Activated T-helper 1 cell treated with anti-CD3 and anti-CD28 coated beads, Interleukin-12 subunit alpha, Interleukin-12 subunit beta, Interleukin-2, Interleukin-4 antibody, amounts not matched to agents 30 ng/mL and 10 ng/mL and 1 ng/mL, durations not matched to agents 14 hours and 24 hours and 36 hours (primary cell): ENCODE measurements at regions of chr14 and their contacts with region 1.

Region 1: DNA sequence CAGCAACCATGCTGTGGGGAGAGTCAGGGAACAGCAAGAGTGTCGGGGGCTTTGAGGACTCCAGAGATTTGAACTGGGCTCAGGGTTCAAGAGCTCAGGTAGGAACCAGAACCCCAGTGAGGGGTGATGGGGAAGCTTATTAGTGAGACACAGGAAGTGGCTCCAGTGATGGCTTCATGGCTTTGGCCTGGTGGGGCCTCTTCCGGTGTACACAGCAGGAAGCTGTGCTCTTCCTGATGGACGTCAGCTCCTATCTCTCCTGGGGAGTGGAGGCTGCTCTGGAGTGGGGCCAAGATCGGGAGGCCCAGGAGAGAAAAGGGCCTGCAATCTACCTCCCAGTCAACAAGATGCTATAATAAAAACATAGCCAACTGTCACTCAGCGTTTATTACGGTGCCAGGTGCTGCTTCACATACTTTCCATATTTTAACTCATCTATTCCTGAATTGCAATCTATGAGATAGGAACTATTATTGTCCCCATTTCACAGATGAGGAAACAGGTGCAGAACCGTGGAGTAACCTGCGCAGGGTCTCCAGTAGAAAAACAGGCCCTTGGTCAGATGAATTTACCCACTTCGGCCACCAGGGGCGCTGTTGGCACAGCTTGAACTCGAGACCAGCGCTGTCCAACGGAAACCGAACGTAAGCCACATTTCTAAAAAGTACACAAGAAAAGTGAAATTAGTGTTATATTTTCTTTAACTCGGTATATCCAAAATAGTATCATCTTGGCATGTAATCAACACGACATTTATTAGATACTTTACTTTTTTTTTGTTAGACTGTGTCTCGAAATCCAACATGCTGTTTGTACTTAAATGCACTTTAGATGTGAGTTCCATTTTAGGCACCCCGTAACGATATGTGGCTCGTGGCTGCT is 63.6 kb upstream of the DLK1 start:
- DNase-seq: peak; percentile 38
- H3K4me3 Mint-ChIP-seq: no peak overlapping the region
- H3K27ac Mint-ChIP-seq: no peak overlapping the region
- H3K4me1 Mint-ChIP-seq: no peaks in the 10 kb centered on the region
- H3K27me3 Mint-ChIP-seq: peaks cover 10% of the 10 kb centered on the region

Region 2: GRCh38 chr14:100486025-100486828 is 176.9 kb before region 1 on chr14:
- intact Hi-C with region 1: no loop called
- DNase-seq: peak; percentile 37
- H3K4me3 Mint-ChIP-seq: no peak overlapping the region
- H3K27ac Mint-ChIP-seq: no peak overlapping the region
- H3K4me1 Mint-ChIP-seq: peaks cover 32% of the 10 kb centered on the region
- H3K27me3 Mint-ChIP-seq: no peaks in the 10 kb centered on the region

Region 3: GRCh38 chr14:100871234-100872186 is 208.4 kb after region 1 on chr14:
- intact Hi-C with region 1: no loop called
- DNase-seq: no peak
- H3K4me3 Mint-ChIP-seq: no peak overlapping the region
- H3K27ac Mint-ChIP-seq: no peak overlapping the region
- H3K4me1 Mint-ChIP-seq: no peaks in the 10 kb centered on the region
- H3K27me3 Mint-ChIP-seq: no peaks in the 10 kb centered on the region

Region 4: DNA sequence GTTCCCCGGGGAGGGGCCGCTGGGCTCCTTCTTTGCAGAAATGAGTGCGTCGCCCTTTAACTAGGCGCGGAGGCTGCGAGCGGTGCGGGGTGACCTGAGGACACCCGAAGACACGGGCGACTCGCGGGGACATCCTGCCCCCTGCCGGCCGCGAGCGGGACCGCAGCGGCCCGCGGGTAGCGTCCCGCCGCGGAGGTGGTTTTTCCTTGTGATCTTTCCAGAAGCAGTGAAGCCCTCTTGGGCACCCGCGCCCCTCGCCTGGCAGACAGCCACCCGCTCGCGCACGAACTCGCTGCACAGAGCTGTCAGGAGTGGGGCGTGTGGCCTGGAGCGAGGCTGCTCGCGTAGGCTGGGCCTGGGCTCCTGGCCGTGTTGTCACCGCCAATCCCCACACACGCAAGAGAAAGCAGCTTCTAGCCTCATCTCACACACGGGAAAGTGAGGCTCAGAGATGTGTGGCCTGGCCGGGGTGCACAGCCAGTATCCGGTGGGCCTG is 965.4 kb after region 1 on chr14:
- intact Hi-C with region 1: loop called (anchors 5 kb)
- DNase-seq: peak; percentile 64
- H3K4me3 Mint-ChIP-seq: no peak overlapping the region
- H3K27ac Mint-ChIP-seq: no peak overlapping the region
- H3K4me1 Mint-ChIP-seq: no peaks in the 10 kb centered on the region
- H3K27me3 Mint-ChIP-seq: peaks cover 6% of the 10 kb centered on the region